CD14-positive monocyte (primary cell): ENCODE measurements at regions of chr12 and their contacts with region 1.

Region 1: DNA sequence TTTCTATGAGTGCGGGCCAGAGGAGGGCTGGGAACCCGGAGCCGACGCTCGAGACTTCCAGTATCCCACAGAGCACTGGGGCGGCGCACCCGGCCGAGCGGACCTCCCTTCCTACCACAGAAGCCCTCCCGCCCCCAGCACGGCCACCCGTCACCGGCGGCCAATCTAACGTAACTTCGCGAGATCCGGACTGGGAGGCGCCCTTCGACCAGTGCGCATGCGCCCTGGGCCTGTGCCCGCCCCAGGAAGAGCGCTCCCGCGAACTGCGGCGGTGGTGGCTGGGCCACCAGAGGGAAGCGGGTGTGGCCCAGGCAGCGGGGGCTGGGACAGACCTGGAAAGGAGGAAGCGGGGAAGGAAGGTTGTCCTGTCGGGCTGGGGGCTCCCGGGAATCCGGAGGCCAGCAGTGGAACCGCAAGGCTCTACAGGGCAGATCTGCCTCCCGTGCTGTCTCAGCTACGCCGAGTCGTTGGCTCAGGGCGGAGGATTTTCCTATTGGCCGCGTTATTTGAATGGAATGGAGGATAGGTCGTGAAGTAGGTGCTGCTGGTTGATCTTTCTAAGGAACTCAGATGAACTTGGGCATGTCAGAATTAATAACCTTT is at the start of gene PPP1R12A:
- DNase-seq: peak; percentile 95 to 96 (median 95)
- H3K4me3 ChIP-seq: peak within 1 kb of the TSS; percentile 83 to 96 (median 87)
- H3K4me3 Mint-ChIP-seq: peak within 1 kb of the TSS; percentile 99
- H3K27ac ChIP-seq: peak within 1 kb of the TSS; percentile 92 to 95
- H3K27ac Mint-ChIP-seq: peak within 1 kb of the TSS; percentile 98 to 99 (median 99)
- H3K4me1 ChIP-seq: peaks cover 31 to 44% of the 10 kb centered on the region in 2 donors
- H3K4me1 Mint-ChIP-seq: peaks cover 44% of the 10 kb centered on the region
- H3K27me3 ChIP-seq: no peaks in the 10 kb centered on the region
- H3K27me3 Mint-ChIP-seq: no peaks in the 10 kb centered on the region
- CTCF ChIP-seq: no peak
- polyA plus RNA-seq, gene PPP1R12A: 26.2 to 57.2 (median 33.1) TPM

Region 2: GRCh38 chr12:79886917-79887519 is 48.1 kb before region 1 on chr12:
- intact Hi-C with region 1: loop called in 1 of 2 experiments (anchors 10 kb)
- DNase-seq: peak; percentile 18 to 49 (median 34)
- H3K4me3 ChIP-seq: no peak overlapping the region
- H3K4me3 Mint-ChIP-seq: no peak overlapping the region
- H3K27ac ChIP-seq: no peak overlapping the region
- H3K27ac Mint-ChIP-seq: no peak overlapping the region
- H3K4me1 ChIP-seq: peaks cover 21 to 27% of the 10 kb centered on the region in 2 donors
- H3K4me1 Mint-ChIP-seq: peaks cover 55% of the 10 kb centered on the region
- H3K27me3 ChIP-seq: no peaks in the 10 kb centered on the region
- H3K27me3 Mint-ChIP-seq: no peaks in the 10 kb centered on the region
- CTCF ChIP-seq: peak; percentile 89

Region 3: DNA sequence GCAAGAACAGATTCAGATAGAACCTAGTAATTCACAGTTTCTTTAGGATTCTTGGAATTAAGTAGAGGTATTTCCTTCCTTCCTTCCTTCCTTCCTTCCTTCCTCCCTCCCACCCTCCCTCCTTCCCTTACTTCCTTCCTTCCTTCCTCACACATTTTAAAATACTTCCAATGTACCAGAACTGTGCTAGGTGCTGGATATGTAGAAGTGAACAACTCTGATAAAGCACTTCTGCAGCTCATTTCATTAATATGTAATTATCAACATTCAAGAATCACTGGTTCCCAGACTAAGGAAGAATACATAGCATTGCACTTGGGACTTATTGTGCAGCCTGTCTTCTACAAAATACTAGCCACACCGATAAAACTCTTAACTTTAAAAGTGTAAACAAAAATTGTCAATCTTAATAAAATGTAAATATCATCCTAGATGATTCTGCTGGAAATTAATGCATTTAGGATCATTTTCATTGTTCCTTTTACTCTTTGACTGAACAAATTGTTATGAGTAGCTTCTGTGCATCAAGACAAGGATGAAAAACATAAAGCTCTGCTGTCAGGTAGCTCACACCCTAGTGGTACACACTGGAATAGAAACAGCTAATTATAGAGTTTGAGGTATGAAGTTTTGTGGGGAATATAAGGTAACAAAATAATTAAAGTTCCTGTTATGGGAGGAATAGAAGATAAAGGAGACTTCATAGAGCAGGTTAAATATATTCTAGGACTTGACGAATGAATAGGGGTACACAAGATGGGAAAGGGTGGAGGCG is 672.4 kb after region 1 on chr12:
- intact Hi-C with region 1: no loop called
- DNase-seq: no peak
- H3K4me3 ChIP-seq: no peak overlapping the region
- H3K4me3 Mint-ChIP-seq: no peak overlapping the region
- H3K27ac ChIP-seq: no peak overlapping the region
- H3K27ac Mint-ChIP-seq: no peak overlapping the region
- H3K4me1 ChIP-seq: no peaks in the 10 kb centered on the region
- H3K4me1 Mint-ChIP-seq: no peaks in the 10 kb centered on the region
- H3K27me3 ChIP-seq: no peaks in the 10 kb centered on the region
- H3K27me3 Mint-ChIP-seq: peaks cover 0 to 7% (median 2%) of the 10 kb centered on the region in 3 donors
- CTCF ChIP-seq: no peak